CD8-positive, alpha-beta T cell (primary cell): ENCODE measurements at regions of chr1 and their contacts with region 1.

Region 1: DNA sequence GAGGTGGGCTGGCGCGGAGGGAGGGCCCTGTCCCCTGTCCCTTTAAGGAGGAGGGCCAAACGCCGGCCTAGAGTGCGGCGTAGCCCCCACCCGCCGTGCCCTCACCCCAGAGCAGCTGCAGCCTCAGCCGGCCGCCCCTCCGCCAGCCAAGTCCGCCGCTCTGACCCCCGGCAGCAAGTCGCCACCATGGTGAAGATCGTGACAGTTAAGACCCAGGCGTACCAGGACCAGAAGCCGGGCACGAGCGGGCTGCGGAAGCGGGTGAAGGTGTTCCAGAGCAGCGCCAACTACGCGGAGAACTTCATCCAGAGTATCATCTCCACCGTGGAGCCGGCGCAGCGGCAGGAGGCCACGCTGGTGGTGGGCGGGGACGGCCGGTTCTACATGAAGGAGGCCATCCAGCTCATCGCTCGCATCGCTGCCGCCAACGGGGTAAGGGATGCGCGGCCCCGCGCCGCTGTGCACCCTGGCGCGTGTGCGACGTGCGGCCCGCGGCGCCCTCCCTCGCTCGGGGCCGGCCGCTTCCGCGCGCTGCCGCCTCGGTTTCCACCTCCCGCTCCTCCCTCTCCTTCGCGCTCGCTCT is at the start of gene PGM1:
- DNase-seq: peak; percentile 53 to 87 (median 76)
- ATAC-seq: peak; percentile 79
- H3K4me3 ChIP-seq: peak within 1 kb of the TSS; percentile 88 to 99
- H3K4me3 Mint-ChIP-seq: peak within 1 kb of the TSS; percentile 98
- H3K27ac ChIP-seq: peak within 1 kb of the TSS; percentile 88 to 93
- H3K27ac Mint-ChIP-seq: peak within 1 kb of the TSS; percentile 98
- H3K4me1 ChIP-seq: peaks cover 9% of the 10 kb centered on the region
- H3K4me1 Mint-ChIP-seq: peaks cover 38% of the 10 kb centered on the region
- H3K27me3 ChIP-seq: no peaks in the 10 kb centered on the region
- H3K27me3 Mint-ChIP-seq: no peaks in the 10 kb centered on the region
- CTCF ChIP-seq: no peak
- total RNA-seq, gene PGM1: 4.3 to 5.0 TPM

Region 2: DNA sequence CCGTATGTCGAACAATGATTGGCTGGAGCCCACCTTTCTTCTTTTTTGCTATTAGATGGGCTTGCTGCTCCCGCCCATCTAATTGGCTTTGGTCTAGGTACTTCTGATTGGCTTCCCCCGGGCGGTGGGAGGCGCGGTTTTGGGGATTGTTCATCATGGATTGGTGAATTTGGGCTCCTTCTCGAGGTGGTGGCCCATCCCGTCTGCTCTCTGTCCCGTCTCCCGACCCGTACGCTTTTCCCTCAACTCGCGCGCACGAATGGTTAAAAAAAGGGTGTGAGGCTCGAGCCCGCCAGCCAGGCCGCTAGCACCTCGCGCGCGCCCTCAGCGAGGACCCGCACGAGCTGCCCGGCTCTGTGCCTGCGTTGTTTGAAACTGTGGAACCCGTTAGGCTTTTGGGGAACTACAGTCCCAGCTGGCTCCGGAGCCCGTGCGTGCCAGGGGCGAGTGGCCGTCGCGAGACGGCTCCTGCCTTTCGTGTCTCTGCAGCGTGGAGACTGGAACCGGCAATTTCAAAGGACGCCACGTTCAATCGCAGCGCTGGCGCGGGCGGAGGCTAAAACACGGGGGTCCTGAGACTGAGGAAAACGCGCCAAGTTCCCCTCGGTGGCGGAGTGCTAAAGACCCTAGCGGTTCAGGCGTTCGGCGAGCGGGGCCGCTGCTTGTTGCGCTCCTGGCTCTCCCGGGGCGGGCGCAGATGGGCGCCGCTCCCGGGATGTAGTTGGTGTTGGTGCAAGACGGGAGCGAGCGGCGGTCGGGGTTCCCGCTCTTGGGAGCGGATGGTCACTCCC is 1156.7 kb before region 1 on chr1 and contains the start of gene USP1:
- CTCF ChIA-PET with region 1: no interaction called
- POLR2A ChIA-PET with region 1: no interaction called
- intact Hi-C with region 1: loop called (anchors 2 to 5 kb)
- DNase-seq: peak; percentile 94 to 100 (median 96)
- ATAC-seq: peak; percentile 82
- H3K4me3 ChIP-seq: peak within 1 kb of the TSS; percentile 90 to 97
- H3K4me3 Mint-ChIP-seq: peak within 1 kb of the TSS; percentile 98
- H3K27ac ChIP-seq: peak within 1 kb of the TSS; percentile 96 to 98
- H3K27ac Mint-ChIP-seq: peak within 1 kb of the TSS; percentile 100
- H3K4me1 ChIP-seq: peaks cover 33% of the 10 kb centered on the region
- H3K4me1 Mint-ChIP-seq: peaks cover 40% of the 10 kb centered on the region
- H3K27me3 ChIP-seq: no peaks in the 10 kb centered on the region
- H3K27me3 Mint-ChIP-seq: no peaks in the 10 kb centered on the region
- CTCF ChIP-seq: no peak
- total RNA-seq, gene USP1: 23.1 to 23.7 TPM

Region 3: GRCh38 chr1:63367215-63368103 is 225.9 kb before region 1 on chr1 and contains the start of gene ALG6:
- CTCF ChIA-PET with region 1: no interaction called
- POLR2A ChIA-PET with region 1: interaction called, 3 read pairs
- intact Hi-C with region 1: loop called (anchors 1 to 5 kb)
- DNase-seq: peak; percentile 79 to 97 (median 89)
- ATAC-seq: peak; percentile 86
- H3K4me3 ChIP-seq: peak within 1 kb of the TSS; percentile 87 to 97
- H3K4me3 Mint-ChIP-seq: peak within 1 kb of the TSS; percentile 96
- H3K27ac ChIP-seq: peak within 1 kb of the TSS; percentile 61 to 73
- H3K27ac Mint-ChIP-seq: peak within 1 kb of the TSS; percentile 88
- H3K4me1 ChIP-seq: peaks cover 14% of the 10 kb centered on the region
- H3K4me1 Mint-ChIP-seq: peaks cover 36% of the 10 kb centered on the region
- H3K27me3 ChIP-seq: peaks cover 0 to 2% of the 10 kb centered on the region in 2 experiments
- H3K27me3 Mint-ChIP-seq: peaks cover 8% of the 10 kb centered on the region
- CTCF ChIP-seq: no peak
- total RNA-seq, gene ALG6: 10.0 to 10.3 TPM

Region 4: DNA sequence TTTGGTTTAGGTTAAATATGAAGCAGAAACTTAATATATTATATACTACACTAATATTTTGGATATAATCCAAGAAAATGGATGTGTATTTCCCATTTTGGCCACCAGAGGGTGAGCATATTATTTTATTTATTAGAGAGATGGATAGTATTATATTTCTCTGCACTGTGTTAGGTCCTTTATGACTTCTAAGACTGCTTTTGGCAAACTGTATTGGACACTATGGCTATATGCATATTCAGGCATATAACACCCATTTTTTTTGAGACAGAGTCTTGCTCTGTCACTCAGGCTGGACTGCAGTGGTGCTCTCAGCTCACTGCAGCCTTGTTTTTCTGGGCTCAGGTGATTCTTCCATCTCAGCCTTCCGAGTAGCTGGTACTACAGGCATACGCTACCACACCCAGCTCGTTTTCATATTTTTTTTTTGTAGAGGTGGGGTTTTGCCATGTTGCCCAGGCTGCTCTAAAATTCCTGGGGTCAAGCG is 18.0 kb before region 1 on chr1:
- CTCF ChIA-PET with region 1: interaction called, 7 read pairs
- POLR2A ChIA-PET with region 1: interaction called, 3 read pairs
- intact Hi-C with region 1: loop called in 1 of 2 experiments (anchors 2 kb)
- DNase-seq: peak in 3 of 9 experiments; percentile 11 to 42 (median 37)
- ATAC-seq: peak; percentile 38
- H3K4me3 ChIP-seq: no peak overlapping the region
- H3K4me3 Mint-ChIP-seq: no peak overlapping the region
- H3K27ac ChIP-seq: no peak overlapping the region
- H3K27ac Mint-ChIP-seq: no peak overlapping the region
- H3K4me1 ChIP-seq: no peaks in the 10 kb centered on the region
- H3K4me1 Mint-ChIP-seq: no peaks in the 10 kb centered on the region
- H3K27me3 ChIP-seq: no peaks in the 10 kb centered on the region
- H3K27me3 Mint-ChIP-seq: no peaks in the 10 kb centered on the region
- CTCF ChIP-seq: peak; percentile 97

Region 5: DNA sequence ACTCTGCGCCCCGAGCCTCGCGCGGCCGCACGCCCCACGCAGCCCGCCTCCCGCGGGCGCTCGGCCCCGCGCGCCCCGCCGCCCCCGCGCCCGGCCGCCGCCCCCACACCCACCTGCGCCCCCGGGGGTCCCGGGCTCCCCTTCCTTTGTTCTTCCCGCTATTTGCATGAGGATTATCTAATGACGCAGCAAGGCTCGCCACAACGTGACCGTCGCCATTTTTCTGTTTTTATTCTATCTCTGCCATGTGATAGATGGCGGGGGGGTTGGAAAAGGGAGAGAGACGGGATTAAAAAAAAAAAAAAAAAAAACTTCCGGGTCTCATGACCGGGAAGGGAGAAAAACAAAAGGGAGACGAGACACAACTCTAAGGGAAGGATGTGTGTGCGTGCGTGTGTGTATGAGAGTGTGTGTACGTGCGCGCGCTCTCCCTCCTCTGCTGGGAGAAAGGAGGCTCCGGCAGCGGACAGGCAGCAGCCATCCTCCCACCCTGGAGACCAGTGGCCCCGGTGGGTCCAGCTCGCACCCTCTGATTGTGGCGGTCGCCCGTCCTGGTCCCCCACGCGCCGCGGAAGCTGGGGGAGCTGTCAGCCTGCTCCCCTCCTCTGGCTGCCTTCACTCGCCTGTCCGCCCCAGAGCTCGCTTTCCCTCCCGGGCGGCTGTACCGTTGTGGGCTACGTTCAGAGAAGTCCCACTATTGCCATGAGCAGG is 1474.3 kb after region 1 on chr1:
- CTCF ChIA-PET with region 1: no interaction called
- POLR2A ChIA-PET with region 1: no interaction called
- intact Hi-C with region 1: loop called (anchors 5 to 10 kb)
- DNase-seq: peak; percentile 29 to 86 (median 64)
- ATAC-seq: peak; percentile 18
- H3K4me3 ChIP-seq: peak overlapping the region; percentile 76 to 88
- H3K4me3 Mint-ChIP-seq: peak overlapping the region; percentile 98
- H3K27ac ChIP-seq: peak overlapping the region; percentile 92 to 95
- H3K27ac Mint-ChIP-seq: peak overlapping the region; percentile 100
- H3K4me1 ChIP-seq: peaks cover 43% of the 10 kb centered on the region
- H3K4me1 Mint-ChIP-seq: peaks cover 57% of the 10 kb centered on the region
- H3K27me3 ChIP-seq: no peaks in the 10 kb centered on the region
- H3K27me3 Mint-ChIP-seq: no peaks in the 10 kb centered on the region
- CTCF ChIP-seq: no peak

Region 6: GRCh38 chr1:65419681-65420589 is 1826.5 kb after region 1 on chr1:
- CTCF ChIA-PET with region 1: no interaction called
- POLR2A ChIA-PET with region 1: no interaction called
- intact Hi-C with region 1: loop called (anchors 10 kb)
- DNase-seq: peak; percentile 97 to 99 (median 98)
- ATAC-seq: peak; percentile 94
- H3K4me3 ChIP-seq: peak overlapping the region; percentile 96 to 98
- H3K4me3 Mint-ChIP-seq: no peak overlapping the region
- H3K27ac ChIP-seq: peak overlapping the region; percentile 69 to 71
- H3K27ac Mint-ChIP-seq: peak overlapping the region; percentile 93
- H3K4me1 ChIP-seq: peaks cover 15% of the 10 kb centered on the region
- H3K4me1 Mint-ChIP-seq: peaks cover 21% of the 10 kb centered on the region
- H3K27me3 ChIP-seq: peaks cover 0 to 3% of the 10 kb centered on the region in 2 experiments
- H3K27me3 Mint-ChIP-seq: no peaks in the 10 kb centered on the region
- CTCF ChIP-seq: no peak